MCF 10A (cell line): ENCODE measurements at regions of chr6 and their contacts with region 1.

Region 1: DNA sequence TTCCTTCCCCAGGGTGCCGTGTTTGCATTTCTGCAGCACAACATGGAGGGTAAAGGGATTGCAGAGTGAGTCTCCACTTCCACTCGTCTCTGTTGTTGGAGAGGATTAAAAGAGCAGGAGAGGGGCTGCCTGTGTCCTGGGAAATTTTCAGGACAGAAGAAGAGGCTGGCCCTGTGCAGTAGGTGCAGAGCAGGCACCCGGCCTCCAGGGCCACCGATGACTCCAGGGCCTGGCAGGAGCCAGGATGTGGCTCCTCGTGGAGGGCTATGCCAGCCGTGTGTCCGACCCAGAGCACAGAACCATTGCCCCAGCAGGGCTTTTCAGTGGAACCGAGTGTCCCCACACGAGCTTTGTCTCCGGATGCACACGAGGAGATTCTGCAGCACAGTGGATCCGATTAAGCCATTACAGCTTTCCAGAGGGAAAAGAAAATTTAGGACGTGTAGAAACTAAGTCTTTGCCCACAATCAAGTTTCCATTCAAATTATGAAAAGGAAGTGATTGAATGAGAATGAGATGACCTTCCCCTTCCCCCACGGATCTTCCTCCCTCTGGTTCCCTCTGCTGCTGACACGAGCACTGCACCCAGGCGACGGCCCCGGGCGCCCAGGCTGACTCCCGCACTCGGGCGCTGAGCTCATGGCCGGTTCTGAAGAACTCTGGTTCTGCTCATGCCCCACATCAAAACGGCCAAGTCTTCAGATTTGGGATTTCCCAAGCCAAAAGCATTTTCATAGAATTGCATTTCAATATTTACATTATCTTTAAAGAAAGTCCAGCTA is 43.1 kb upstream of the UNC93A start:
- DNase-seq: no peak
- H3K4me3 Mint-ChIP-seq: no peak overlapping the region
- H3K27ac Mint-ChIP-seq: no peak overlapping the region
- H3K4me1 Mint-ChIP-seq: no peaks in the 10 kb centered on the region
- H3K27me3 Mint-ChIP-seq: peaks cover 41% of the 10 kb centered on the region
- CTCF ChIP-seq: no peak

Region 2: DNA sequence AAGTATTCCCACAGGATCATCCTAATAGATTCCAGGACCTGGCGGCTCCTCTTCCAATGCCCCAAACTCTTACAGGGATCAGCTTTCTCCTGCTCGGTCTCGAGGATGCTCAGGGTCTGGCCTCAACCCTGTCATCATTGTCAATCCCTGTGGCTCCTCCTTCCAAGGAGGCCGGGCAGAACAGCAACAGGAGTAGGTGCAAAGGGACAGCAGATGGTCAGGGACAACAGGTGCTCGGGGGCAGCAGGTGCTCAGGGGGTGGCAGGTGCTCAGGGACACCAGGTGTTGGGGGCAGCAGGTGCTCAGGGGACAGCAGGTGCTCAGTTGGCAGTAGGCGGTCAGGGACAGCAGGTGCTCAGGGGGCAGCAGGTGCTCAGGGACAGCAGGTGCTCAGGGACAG is 161.7 kb after region 1 on chr6:
- CTCF ChIA-PET with region 1: no interaction called
- POLR2A ChIA-PET with region 1: no interaction called
- intact Hi-C with region 1: loop called (anchors 5 kb)
- DNase-seq: no peak
- H3K4me3 Mint-ChIP-seq: no peak overlapping the region
- H3K27ac Mint-ChIP-seq: no peak overlapping the region
- H3K4me1 Mint-ChIP-seq: no peaks in the 10 kb centered on the region
- H3K27me3 Mint-ChIP-seq: peaks cover 78% of the 10 kb centered on the region
- CTCF ChIP-seq: no peak